Activated CD4-positive, alpha-beta memory T cell treated with anti-CD3 and anti-CD28 coated beads for 36 hours (primary cell): ENCODE measurements at regions of chr13 and their contacts with region 1.

Region 1: DNA sequence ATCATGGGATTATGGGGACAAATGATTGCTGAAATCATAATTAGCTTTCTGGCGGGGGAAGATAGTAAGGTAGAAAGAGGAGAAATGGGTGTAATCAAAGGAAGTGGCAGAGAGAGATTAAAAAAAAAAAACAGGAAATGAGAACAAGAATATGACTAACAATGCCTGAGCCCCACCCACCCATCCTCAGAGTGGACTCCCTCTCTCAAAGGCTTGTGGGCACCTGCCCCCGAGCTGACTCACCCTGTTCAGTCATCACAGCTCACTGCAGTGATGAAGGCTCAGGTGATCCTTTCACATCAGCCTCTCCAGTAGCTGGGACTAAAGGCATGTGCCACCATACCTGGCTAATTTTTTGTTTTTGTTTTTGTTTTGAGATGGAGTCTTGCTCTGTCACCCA is 26.4 kb upstream of the TPT1 start:
- DNase-seq: peak; percentile 96
- H3K4me3 Mint-ChIP-seq: peak overlapping the region; percentile 39
- H3K27ac Mint-ChIP-seq: peak overlapping the region; percentile 85
- H3K4me1 Mint-ChIP-seq: peaks cover 52% of the 10 kb centered on the region
- H3K27me3 Mint-ChIP-seq: no peaks in the 10 kb centered on the region

Region 2: DNA sequence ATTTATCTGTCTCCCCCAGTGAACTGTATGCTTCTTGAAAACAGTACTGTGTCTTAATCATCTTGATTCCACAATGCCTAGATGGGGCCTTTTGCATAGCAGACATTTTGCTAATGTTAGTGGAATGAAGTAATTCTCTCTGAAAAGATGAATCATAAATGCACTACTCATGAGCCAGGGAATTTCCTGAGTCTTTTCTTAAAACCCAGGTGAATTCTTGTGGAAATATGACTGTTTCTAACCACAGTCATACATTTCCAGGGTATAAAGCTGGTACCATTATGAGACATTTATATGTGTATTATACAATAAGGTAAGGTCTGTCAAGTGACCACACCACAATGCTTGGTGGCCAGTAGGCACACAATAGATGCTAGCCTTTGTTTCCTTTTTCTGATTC is 161.0 kb before region 1 on chr13:
- CTCF ChIA-PET with region 1: no interaction called
- POLR2A ChIA-PET with region 1: no interaction called
- intact Hi-C with region 1: loop called (anchors 1 kb)
- DNase-seq: peak; percentile 34
- H3K4me3 Mint-ChIP-seq: no peak overlapping the region
- H3K27ac Mint-ChIP-seq: no peak overlapping the region
- H3K4me1 Mint-ChIP-seq: peaks cover 23% of the 10 kb centered on the region
- H3K27me3 Mint-ChIP-seq: no peaks in the 10 kb centered on the region

Region 3: GRCh38 chr13:45340926-45341750 is 26.2 kb before region 1 on chr13 and contains the start of gene TPT1:
- CTCF ChIA-PET with region 1: interaction called, 5 read pairs
- POLR2A ChIA-PET with region 1: interaction called, 31 read pairs
- intact Hi-C with region 1: loop called (anchors 1 kb)
- DNase-seq: peak; percentile 100
- H3K4me3 Mint-ChIP-seq: peak within 1 kb of the TSS; percentile 94
- H3K27ac Mint-ChIP-seq: peak within 1 kb of the TSS; percentile 99
- H3K4me1 Mint-ChIP-seq: peaks cover 45% of the 10 kb centered on the region
- H3K27me3 Mint-ChIP-seq: no peaks in the 10 kb centered on the region
- total RNA-seq, gene TPT1: 3,227 to 3,264 TPM

Region 4: DNA sequence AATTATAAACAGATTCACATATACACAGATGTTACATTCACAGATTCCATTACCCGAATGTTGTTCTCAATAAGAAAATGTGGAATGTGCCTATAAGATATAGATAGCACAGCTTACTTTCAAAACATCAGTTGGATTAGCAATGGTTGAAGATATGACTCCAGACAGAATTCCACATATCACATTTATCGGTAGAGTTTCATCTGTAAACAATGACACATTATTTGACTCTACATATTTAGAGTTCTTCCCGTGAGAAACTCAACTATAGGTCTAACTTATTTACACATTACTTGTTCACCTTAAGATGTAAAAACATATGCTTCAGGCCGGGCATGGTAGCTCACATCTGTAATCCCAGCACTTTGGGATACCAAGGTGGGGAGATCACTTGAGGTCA is 36.9 kb after region 1 on chr13:
- CTCF ChIA-PET with region 1: interaction called, 14 read pairs
- POLR2A ChIA-PET with region 1: no interaction called
- intact Hi-C with region 1: no loop called
- DNase-seq: no peak
- H3K4me3 Mint-ChIP-seq: no peak overlapping the region
- H3K27ac Mint-ChIP-seq: no peak overlapping the region
- H3K4me1 Mint-ChIP-seq: peaks cover 7% of the 10 kb centered on the region
- H3K27me3 Mint-ChIP-seq: no peaks in the 10 kb centered on the region

Region 5: GRCh38 chr13:45464687-45465453 is 97.5 kb after region 1 on chr13 and contains the start of gene COG3:
- CTCF ChIA-PET with region 1: interaction called, 7 read pairs
- POLR2A ChIA-PET with region 1: interaction called, 4 read pairs
- intact Hi-C with region 1: loop called (anchors 1 kb)
- DNase-seq: peak; percentile 97
- H3K4me3 Mint-ChIP-seq: peak within 1 kb of the TSS; percentile 85
- H3K27ac Mint-ChIP-seq: peak within 1 kb of the TSS; percentile 94
- H3K4me1 Mint-ChIP-seq: peaks cover 47% of the 10 kb centered on the region
- H3K27me3 Mint-ChIP-seq: no peaks in the 10 kb centered on the region
- total RNA-seq, gene COG3: 19.5 to 20.5 TPM

Region 6: DNA sequence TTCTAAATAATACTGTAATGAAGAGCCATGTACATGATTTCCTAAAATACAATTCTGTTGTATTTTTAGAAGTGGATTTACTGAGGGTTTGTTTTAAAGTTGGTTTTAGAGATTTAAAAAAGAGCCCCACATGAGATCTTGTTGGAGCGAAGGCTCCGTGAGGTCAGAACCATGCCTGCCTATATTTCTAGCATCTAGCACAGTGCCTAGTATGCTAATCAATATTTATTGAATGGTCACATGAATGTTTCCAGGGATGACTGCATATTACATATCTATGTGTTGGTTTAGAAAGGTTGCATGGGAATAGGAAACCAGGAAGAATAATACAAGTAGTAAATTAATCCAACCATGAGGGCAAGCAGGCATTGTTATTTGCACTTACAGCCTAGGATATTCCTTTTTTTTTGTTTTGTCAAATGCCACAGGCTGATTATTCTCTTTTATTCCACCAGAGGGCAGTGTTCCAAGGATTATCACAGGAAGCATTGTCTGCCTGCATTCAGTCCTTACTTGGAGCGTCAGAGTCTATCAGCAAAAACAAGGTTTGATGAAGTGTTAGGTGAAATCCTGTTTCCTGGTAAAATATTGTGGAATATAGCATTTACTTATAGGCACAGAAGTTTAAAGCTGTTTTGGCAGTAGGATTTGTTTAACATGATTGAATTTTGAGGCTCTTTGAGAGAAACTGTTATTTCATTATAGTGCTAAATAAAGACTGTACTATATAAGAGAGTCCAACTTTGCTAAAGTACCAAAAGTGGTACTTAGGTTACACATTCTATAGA is 144.1 kb after region 1 on chr13:
- CTCF ChIA-PET with region 1: interaction called, 6 read pairs
- POLR2A ChIA-PET with region 1: no interaction called
- intact Hi-C with region 1: loop called (anchors 10 kb)
- DNase-seq: peak; percentile 13
- H3K4me3 Mint-ChIP-seq: no peak overlapping the region
- H3K27ac Mint-ChIP-seq: peak overlapping the region; percentile 70
- H3K4me1 Mint-ChIP-seq: peaks cover 13% of the 10 kb centered on the region
- H3K27me3 Mint-ChIP-seq: no peaks in the 10 kb centered on the region